ENCODE measurements at regions of chr15 and their contacts with region 1.

Region 1: GRCh38 chr15:40217159-40217824 is 21.6 kb upstream of the PAK6 start:
- DNase-seq: peak; percentile 66
- H3K4me3 ChIP-seq: no peak overlapping the region
- H3K27ac ChIP-seq: no peak overlapping the region
- H3K4me1 ChIP-seq: no peaks in the 10 kb centered on the region
- H3K27me3 ChIP-seq: no peaks in the 10 kb centered on the region
- CTCF ChIP-seq: peak; percentile 86

Region 2: GRCh38 chr15:40044717-40045571 is 172.3 kb before region 1 on chr15:
- intact Hi-C with region 1: loop called (anchors 5 kb)
- DNase-seq: peak; percentile 94
- H3K4me3 ChIP-seq: no peak overlapping the region
- H3K27ac ChIP-seq: no peak overlapping the region
- H3K4me1 ChIP-seq: peaks cover 29% of the 10 kb centered on the region
- H3K27me3 ChIP-seq: no peaks in the 10 kb centered on the region
- CTCF ChIP-seq: peak; percentile 85

Region 3: GRCh38 chr15:40307421-40308211 is 90.3 kb after region 1 on chr15 and contains the start of gene PLCB2:
- intact Hi-C with region 1: no loop called
- DNase-seq: peak; percentile 49
- H3K4me3 ChIP-seq: peak within 1 kb of the TSS; percentile 27
- H3K27ac ChIP-seq: peak within 1 kb of the TSS; percentile 69
- H3K4me1 ChIP-seq: no peaks in the 10 kb centered on the region
- H3K27me3 ChIP-seq: no peaks in the 10 kb centered on the region
- CTCF ChIP-seq: no peak
- total RNA-seq, gene PLCB2: 5.7 to 9.5 TPM

Region 4: GRCh38 chr15:40782580-40783227 is 565.4 kb after region 1 on chr15:
- intact Hi-C with region 1: no loop called
- DNase-seq: peak; percentile 83
- H3K4me3 ChIP-seq: no peak overlapping the region
- H3K27ac ChIP-seq: no peak overlapping the region
- H3K4me1 ChIP-seq: peaks cover 7% of the 10 kb centered on the region
- H3K27me3 ChIP-seq: no peaks in the 10 kb centered on the region
- CTCF ChIP-seq: peak; percentile 72